ENCODE measurements at regions of chr11 and their contacts with region 1.

Region 1: DNA sequence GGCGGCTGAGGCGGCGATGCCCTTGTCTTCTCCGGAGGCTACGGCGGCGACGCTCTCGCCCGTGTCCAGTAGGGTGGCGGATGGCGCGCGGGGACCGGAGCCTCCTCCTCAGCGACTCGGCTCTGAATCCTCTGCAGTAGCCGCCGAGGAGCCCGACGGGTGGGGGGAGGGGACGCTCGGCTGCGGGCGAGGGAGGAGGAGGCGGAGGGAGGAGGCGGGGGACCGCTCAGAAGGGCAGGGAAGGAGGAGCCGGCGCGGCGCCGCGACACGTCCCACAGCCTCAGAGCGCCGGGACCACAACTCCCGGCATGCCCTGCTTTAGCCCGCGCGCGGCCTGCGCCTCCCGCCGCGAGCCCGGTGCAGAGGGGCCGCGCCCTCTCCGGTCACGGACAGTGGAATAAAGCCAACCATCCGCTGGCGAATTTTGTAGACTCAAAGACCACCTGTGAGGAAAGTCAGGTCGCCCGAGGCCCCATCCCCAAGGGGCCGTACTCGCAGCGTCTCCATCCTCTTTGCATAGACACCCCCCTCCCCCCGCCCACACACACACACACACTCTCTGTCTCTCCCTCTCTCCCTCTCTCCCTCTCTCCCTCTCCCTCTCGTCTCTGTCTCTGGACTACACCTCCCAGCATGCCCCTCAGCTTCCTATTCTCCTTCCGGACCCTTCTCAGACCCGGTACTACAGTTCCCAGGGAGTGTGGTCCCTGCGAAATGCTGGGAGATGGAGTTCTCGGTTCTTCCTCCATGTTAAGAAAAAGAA is at the start of gene FAM168A:
- DNase-seq: peak; percentile 95
- H3K4me3 ChIP-seq: peak within 1 kb of the TSS; percentile 79
- H3K27ac ChIP-seq: peak within 1 kb of the TSS; percentile 72
- H3K4me1 ChIP-seq: peaks cover 35% of the 10 kb centered on the region
- CTCF ChIP-seq: no peak
- total RNA-seq, gene FAM168A: 6.4 and 10.1 TPM in 2 replicates

Region 2: GRCh38 chr11:73612601-73613140 is 14.5 kb after region 1 on chr11:
- CTCF ChIA-PET with region 1: no interaction called
- POLR2A ChIA-PET with region 1: interaction called, 10 read pairs
- intact Hi-C with region 1: no loop called
- DNase-seq: no peak
- H3K4me3 ChIP-seq: no peak overlapping the region
- H3K27ac ChIP-seq: no peak overlapping the region
- H3K4me1 ChIP-seq: no peaks in the 10 kb centered on the region
- CTCF ChIP-seq: no peak

Region 3: DNA sequence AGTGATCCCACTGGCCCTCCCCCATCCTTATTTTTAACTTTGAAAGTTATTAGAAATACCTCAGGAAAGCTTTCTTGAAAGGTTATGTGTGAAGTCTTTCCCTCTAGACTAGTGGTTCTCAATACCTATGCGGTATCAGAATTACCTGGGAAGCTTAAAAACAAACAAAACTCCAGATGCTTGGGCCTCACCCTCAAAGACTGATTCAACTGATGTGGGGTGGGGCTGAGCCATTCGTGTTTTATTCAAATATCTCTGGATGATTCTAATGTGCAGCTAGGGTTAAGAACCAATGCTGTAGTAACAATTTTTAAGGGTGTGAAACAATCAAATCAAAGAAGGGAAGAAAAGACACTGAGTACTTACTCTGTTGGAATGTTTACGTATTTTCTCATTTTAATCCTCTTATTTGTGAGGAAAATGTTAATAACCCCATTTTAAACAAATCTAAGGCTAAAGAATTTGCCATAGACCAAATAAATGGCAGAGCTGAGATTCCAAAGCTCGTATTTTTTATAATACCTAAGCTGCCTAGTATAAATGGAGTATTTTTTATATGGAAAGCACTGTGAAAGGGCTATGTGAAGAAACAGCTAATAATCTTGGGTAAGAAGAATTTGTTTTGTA is 95.9 kb after region 1 on chr11:
- CTCF ChIA-PET with region 1: no interaction called
- POLR2A ChIA-PET with region 1: no interaction called
- intact Hi-C with region 1: no loop called
- DNase-seq: no peak
- H3K4me3 ChIP-seq: no peak overlapping the region
- H3K27ac ChIP-seq: no peak overlapping the region
- H3K4me1 ChIP-seq: no peaks in the 10 kb centered on the region
- CTCF ChIP-seq: no peak

Region 4: GRCh38 chr11:74288161-74288560 is 690.0 kb after region 1 on chr11:
- CTCF ChIA-PET with region 1: no interaction called
- POLR2A ChIA-PET with region 1: no interaction called
- intact Hi-C with region 1: no loop called
- DNase-seq: no peak
- H3K4me3 ChIP-seq: no peak overlapping the region
- H3K27ac ChIP-seq: no peak overlapping the region
- H3K4me1 ChIP-seq: no peaks in the 10 kb centered on the region
- CTCF ChIP-seq: no peak

Measured in OCI-LY7 (cell line).